ENCODE measurements at regions of chr10 and their contacts with region 1.

Region 1: GRCh38 chr10:97483506-97483905 is 14.7 kb downstream of the MMS19 start:
- DNase-seq: no peak
- H3K4me3 ChIP-seq: no peak overlapping the region
- H3K27ac ChIP-seq: peak overlapping the region; percentile 36
- H3K4me1 ChIP-seq: peaks cover 58% of the 10 kb centered on the region
- H3K27me3 ChIP-seq: no peaks in the 10 kb centered on the region
- CTCF ChIP-seq: no peak

Region 2: GRCh38 chr10:96991313-96991841 is 492.1 kb before region 1 on chr10:
- intact Hi-C with region 1: no loop called
- DNase-seq: no peak
- H3K4me3 ChIP-seq: no peak overlapping the region
- H3K27ac ChIP-seq: no peak overlapping the region
- H3K4me1 ChIP-seq: peaks cover 22% of the 10 kb centered on the region
- H3K27me3 ChIP-seq: no peaks in the 10 kb centered on the region
- CTCF ChIP-seq: no peak

Region 3: DNA sequence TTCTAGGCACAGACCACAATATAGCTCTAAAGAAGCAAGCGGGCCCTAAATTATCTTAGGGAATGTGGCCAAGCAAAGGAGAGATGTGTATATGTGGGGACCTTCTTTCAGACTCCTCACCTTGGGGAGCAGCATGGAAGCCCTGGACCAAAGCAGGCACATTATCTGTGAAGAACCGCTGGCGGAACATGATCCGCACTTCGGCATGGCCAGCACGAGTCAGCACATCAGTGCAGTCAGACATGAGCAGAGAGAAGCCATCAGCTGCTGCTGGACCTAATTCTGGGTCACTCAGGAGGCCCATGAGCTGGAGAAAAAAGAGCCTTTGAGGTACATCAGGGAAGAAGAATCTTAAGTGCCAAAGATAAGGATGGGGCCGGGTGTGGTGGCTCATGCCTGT is 23.6 kb before region 1 on chr10:
- intact Hi-C with region 1: loop called (anchors 1 kb)
- DNase-seq: no peak
- H3K4me3 ChIP-seq: no peak overlapping the region
- H3K27ac ChIP-seq: no peak overlapping the region
- H3K4me1 ChIP-seq: peaks cover 23% of the 10 kb centered on the region
- H3K27me3 ChIP-seq: no peaks in the 10 kb centered on the region
- CTCF ChIP-seq: no peak

Region 4: DNA sequence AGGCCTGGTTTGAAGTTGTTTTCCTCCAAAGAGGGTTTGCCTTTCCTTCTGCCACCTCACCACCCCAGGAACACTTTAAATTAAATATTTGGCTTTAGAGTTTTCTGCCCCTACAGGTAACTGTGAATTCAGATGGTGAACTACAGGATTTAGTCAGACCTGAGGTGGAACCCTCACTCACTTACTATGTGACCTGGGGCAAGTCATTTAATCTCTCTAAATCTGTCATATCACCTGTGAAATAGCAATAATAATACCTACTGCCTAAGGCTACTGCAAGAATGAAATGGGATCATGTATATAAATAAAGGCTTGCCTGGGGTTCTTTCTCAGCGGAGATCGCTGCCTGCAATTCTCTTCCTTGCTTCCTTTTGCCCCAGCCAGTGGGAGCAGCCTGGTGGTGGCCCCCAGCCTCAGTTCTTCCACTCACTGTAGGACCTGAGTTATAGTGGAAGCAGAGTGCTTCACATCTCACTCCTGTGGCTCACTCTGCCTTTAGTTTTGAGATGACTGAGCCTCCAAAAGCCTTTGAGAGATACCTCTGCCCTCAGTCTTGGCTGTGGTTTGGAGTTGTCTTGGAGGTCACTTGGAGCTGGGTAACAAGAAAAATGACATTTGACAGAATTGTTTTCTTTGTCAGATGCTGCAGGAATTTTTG is 83.0 kb after region 1 on chr10:
- intact Hi-C with region 1: no loop called
- DNase-seq: no peak
- H3K4me3 ChIP-seq: no peak overlapping the region
- H3K27ac ChIP-seq: no peak overlapping the region
- H3K4me1 ChIP-seq: peaks cover 12% of the 10 kb centered on the region
- H3K27me3 ChIP-seq: no peaks in the 10 kb centered on the region
- CTCF ChIP-seq: no peak